ENCODE measurements at regions of chr2 and their contacts with region 1.

Region 1: DNA sequence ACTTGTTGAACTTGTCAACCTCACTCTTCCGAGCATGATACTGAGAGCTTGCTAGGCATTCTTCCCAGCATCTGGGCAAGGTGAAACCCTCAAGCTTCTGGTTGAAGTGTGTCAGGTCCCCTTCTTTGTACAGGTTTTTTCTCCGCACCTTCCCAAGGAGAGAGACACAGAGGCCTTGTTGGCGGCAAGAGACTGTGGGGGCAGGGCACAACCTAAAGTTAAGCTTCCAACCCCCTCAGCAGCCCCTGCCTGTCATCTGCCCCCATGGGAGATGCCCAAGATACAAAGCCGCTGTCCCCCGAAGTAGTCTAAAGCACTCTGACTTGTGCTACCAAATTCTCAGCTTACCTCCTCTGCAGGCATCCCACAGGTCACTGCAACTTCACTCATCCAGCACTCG is 64.9 kb downstream of the XDH start:
- DNase-seq: no peak
- H3K4me3 ChIP-seq: no peak overlapping the region
- H3K27ac ChIP-seq: no peak overlapping the region
- H3K4me1 ChIP-seq: no peaks in the 10 kb centered on the region
- CTCF ChIP-seq: no peak

Region 2: GRCh38 chr2:30736461-30737325 is 613.0 kb before region 1 on chr2:
- CTCF ChIA-PET with region 1: interaction called, 12 read pairs
- POLR2A ChIA-PET with region 1: no interaction called
- intact Hi-C with region 1: no loop called
- DNase-seq: no peak
- H3K4me3 ChIP-seq: no peak overlapping the region
- H3K27ac ChIP-seq: no peak overlapping the region
- H3K4me1 ChIP-seq: no peaks in the 10 kb centered on the region
- CTCF ChIP-seq: no peak

Region 3: GRCh38 chr2:31333527-31334183 is 16.0 kb before region 1 on chr2:
- CTCF ChIA-PET with region 1: no interaction called
- POLR2A ChIA-PET with region 1: no interaction called
- intact Hi-C with region 1: no loop called
- DNase-seq: peak; percentile 85
- H3K4me3 ChIP-seq: no peak overlapping the region
- H3K27ac ChIP-seq: no peak overlapping the region
- H3K4me1 ChIP-seq: peaks cover 9% of the 10 kb centered on the region
- CTCF ChIP-seq: peak; percentile 100

Region 4: GRCh38 chr2:31401580-31401979 is 51.9 kb after region 1 on chr2:
- CTCF ChIA-PET with region 1: no interaction called
- POLR2A ChIA-PET with region 1: no interaction called
- intact Hi-C with region 1: no loop called
- DNase-seq: no peak
- H3K4me3 ChIP-seq: no peak overlapping the region
- H3K27ac ChIP-seq: no peak overlapping the region
- H3K4me1 ChIP-seq: no peaks in the 10 kb centered on the region
- CTCF ChIP-seq: no peak

Measured in OCI-LY7 (cell line).